ENCODE measurements at regions of chr6 and their contacts with region 1.

Region 1: GRCh38 chr6:16319813-16320532 is 81.6 kb downstream of the GMPR start:
- DNase-seq: peak; percentile 63 to 86
- ATAC-seq: peak; percentile 59 to 73 (median 64)
- H3K4me3 ChIP-seq: peak overlapping the region; percentile 19
- H3K4me3 Mint-ChIP-seq: peak overlapping the region; percentile 69
- H3K27ac ChIP-seq: peak overlapping the region; percentile 77
- H3K27ac Mint-ChIP-seq: peak overlapping the region; percentile 77 to 95
- H3K4me1 ChIP-seq: peaks cover 73% of the 10 kb centered on the region
- H3K4me1 Mint-ChIP-seq: peaks cover 67 to 70% of the 10 kb centered on the region in 2 donors
- H3K27me3 ChIP-seq: no peaks in the 10 kb centered on the region
- H3K27me3 Mint-ChIP-seq: no peaks in the 10 kb centered on the region
- CTCF ChIP-seq: no peak

Region 2: GRCh38 chr6:16236631-16237199 is 83.3 kb before region 1 on chr6:
- intact Hi-C with region 1: no loop called
- DNase-seq: peak in 1 of 2 donors; percentile 9
- ATAC-seq: no peak
- H3K4me3 ChIP-seq: no peak overlapping the region
- H3K4me3 Mint-ChIP-seq: peak overlapping the region; percentile 58
- H3K27ac ChIP-seq: no peak overlapping the region
- H3K27ac Mint-ChIP-seq: peak overlapping the region in 1 of 2 donors; percentile 9
- H3K4me1 ChIP-seq: peaks cover 22% of the 10 kb centered on the region
- H3K4me1 Mint-ChIP-seq: peaks cover 23 to 31% of the 10 kb centered on the region in 2 donors
- H3K27me3 ChIP-seq: peaks cover 3% of the 10 kb centered on the region
- H3K27me3 Mint-ChIP-seq: peaks cover 27 to 37% of the 10 kb centered on the region in 2 donors
- CTCF ChIP-seq: no peak

Region 3: GRCh38 chr6:16420715-16421461 is 100.9 kb after region 1 on chr6:
- intact Hi-C with region 1: loop called (anchors 5 kb)
- DNase-seq: peak in 1 of 2 donors; percentile 84
- ATAC-seq: peak; percentile 87 to 88 (median 88)
- H3K4me3 ChIP-seq: no peak overlapping the region
- H3K4me3 Mint-ChIP-seq: peak overlapping the region; percentile 77
- H3K27ac ChIP-seq: peak overlapping the region; percentile 84
- H3K27ac Mint-ChIP-seq: peak overlapping the region; percentile 93 to 96
- H3K4me1 ChIP-seq: peaks cover 21% of the 10 kb centered on the region
- H3K4me1 Mint-ChIP-seq: peaks cover 34 to 38% of the 10 kb centered on the region in 2 donors
- H3K27me3 ChIP-seq: no peaks in the 10 kb centered on the region
- H3K27me3 Mint-ChIP-seq: no peaks in the 10 kb centered on the region
- CTCF ChIP-seq: no peak

Region 4: DNA sequence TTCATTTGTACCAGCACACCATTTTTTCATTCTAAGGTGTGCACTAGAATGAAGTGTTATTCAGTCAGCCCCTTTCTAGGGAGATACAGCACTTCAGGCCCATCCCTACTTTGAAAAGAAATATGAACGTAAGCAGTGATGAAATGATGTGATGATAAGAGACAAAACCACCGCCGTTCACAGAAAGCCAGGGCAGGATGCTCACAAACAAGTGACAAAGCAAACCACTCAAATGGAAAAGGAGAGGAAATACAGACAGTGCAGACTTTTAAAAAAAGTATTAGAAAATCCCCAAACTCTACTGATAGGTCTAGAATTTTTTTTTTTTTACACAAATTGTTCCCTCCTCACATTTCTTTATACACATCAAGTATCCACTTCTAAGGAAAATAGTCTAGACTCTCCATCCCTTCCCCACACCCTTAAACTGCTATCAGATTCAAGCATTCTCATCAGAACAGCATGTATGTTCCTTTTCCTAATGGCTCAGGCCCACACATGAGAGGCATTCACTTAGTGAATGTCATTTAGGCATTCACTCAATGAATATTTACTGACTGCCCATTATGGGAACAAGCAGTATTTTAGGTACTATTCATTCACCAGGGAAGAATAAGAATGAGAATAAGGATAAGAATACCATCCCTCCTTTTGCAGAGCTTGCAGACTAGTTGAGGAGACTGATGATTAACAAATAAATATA is 161.9 kb after region 1 on chr6:
- intact Hi-C with region 1: loop called (anchors 2 kb)
- DNase-seq: peak in 1 of 2 donors; percentile 92
- ATAC-seq: peak; percentile 85 to 89 (median 86)
- H3K4me3 ChIP-seq: no peak overlapping the region
- H3K4me3 Mint-ChIP-seq: peak overlapping the region; percentile 17
- H3K27ac ChIP-seq: peak overlapping the region; percentile 50
- H3K27ac Mint-ChIP-seq: peak overlapping the region; percentile 82 to 91
- H3K4me1 ChIP-seq: peaks cover 23% of the 10 kb centered on the region
- H3K4me1 Mint-ChIP-seq: peaks cover 46 to 50% of the 10 kb centered on the region in 2 donors
- H3K27me3 ChIP-seq: no peaks in the 10 kb centered on the region
- H3K27me3 Mint-ChIP-seq: no peaks in the 10 kb centered on the region
- CTCF ChIP-seq: no peak